Right ventricle myocardium superior (tissue), 1 donor: ENCODE measurements at regions of chr3 and their contacts with region 1.

Region 1: DNA sequence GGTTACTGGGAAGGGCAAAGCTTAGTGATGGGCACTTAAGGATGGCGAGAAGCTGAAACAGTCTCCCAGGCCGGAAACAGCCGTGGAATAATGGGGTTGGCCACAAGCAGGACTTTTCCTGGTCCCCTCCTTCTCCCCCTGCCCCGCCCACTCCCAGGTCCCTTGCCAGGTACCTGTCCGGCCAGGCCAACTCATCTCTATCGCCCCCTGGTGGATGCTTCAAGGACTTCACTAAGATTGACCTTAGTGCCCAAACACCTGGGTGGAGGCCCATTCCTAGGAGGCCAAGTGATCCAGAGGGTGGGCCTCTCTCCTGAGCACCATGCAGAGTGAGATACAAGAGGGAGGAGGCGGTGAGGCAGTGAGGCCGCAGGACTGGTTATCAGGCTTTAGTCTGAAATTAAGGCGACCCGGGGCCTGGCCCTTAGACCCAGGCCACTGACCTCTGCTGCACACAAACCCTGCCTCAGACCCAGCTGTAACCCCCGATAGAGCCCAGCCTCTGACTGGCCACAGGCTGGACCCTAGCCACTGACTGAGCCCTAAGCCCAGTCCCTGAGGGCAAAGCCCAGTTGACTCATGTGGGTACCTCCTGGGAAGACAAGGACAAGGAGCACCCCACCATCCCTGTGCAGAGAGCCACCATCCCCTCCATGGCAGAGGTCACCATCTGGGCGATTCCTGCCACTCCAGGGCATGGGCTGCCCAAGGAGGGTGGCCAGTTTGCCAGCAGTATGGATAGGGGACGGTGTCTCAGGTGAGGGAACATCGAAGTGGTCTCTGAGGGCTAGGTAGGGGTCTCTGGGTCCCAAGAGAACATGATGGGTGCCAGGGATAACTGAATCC is 37.6 kb downstream of the VIPR1 start:
- DNase-seq: no peak
- ATAC-seq: peak; percentile 44

Region 2: GRCh38 chr3:42502429-42503250 is 37.5 kb before region 1 on chr3 and contains the start of gene VIPR1:
- intact Hi-C with region 1: loop called (anchors 5 kb)
- DNase-seq: peak; percentile 85
- ATAC-seq: peak; percentile 93
- total RNA-seq, gene VIPR1: 3.4 TPM